Uterus (tissue), 4 donors: ENCODE measurements at regions of chr12 and their contacts with region 1.

Region 1: GRCh38 chr12:14995583-14996425 is 23.0 kb downstream of the PDE6H start:
- DNase-seq: no peak
- H3K4me3 ChIP-seq: no peak overlapping the region
- H3K27ac ChIP-seq: peak overlapping the region; percentile 57 to 96
- H3K4me1 ChIP-seq: no peaks in the 10 kb centered on the region
- H3K27me3 ChIP-seq: no peaks in the 10 kb centered on the region
- CTCF ChIP-seq: peak; percentile 63 to 79 (median 64)
- POLR2A ChIP-seq: no peak

Region 2: DNA sequence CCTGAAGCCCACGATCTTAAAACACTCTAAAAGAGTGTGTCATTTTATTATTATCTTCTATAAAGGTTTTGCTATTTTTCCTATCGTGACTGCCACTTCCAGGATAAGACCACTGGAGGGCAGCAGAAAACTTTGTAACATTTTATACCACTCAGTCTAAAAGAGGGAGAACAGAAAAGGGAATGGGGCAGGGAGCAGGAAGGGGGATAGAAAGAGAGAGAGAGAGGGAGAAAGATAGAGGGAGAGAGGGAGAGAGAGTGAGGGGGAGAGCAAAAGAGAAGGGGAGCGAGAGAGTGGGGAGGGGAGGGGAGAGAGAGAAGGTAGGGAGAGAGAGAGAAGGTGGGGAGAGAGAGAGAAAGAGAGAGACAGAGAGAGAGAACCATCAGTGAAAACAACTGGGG is 150.5 kb before region 1 on chr12:
- intact Hi-C with region 1: loop called (anchors 5 kb)
- DNase-seq: peak; percentile 48 to 69
- H3K4me3 ChIP-seq: no peak overlapping the region
- H3K27ac ChIP-seq: peak overlapping the region; percentile 53 to 73
- H3K4me1 ChIP-seq: peaks cover 0 to 9% of the 10 kb centered on the region in 2 donors
- H3K27me3 ChIP-seq: no peaks in the 10 kb centered on the region
- CTCF ChIP-seq: peak; percentile 62 to 89 (median 82)
- POLR2A ChIP-seq: no peak

Region 3: GRCh38 chr12:15220994-15221885 is 225.4 kb after region 1 on chr12 and contains the start of gene RERG:
- intact Hi-C with region 1: loop called (anchors 5 kb)
- DNase-seq: peak; percentile 82 to 90
- H3K4me3 ChIP-seq: peak within 1 kb of the TSS; percentile 65 to 68
- H3K27ac ChIP-seq: peak within 1 kb of the TSS; percentile 96 to 98
- H3K4me1 ChIP-seq: no peaks in the 10 kb centered on the region
- H3K27me3 ChIP-seq: no peaks in the 10 kb centered on the region
- CTCF ChIP-seq: peak; percentile 91 to 99 (median 99)
- POLR2A ChIP-seq: peak; percentile 50 to 77
- total RNA-seq, gene RERG: 61.6 to 236 (median 150) TPM